ENCODE measurements at regions of chr4 and their contacts with region 1.

Region 1: GRCh38 chr4:119103263-119103662 is 32.4 kb upstream of the MYOZ2 start:
- DNase-seq: peak in 1 of 2 donors; percentile 87
- H3K4me3 ChIP-seq: no peak overlapping the region
- H3K27ac ChIP-seq: peak overlapping the region; percentile 81
- H3K4me1 ChIP-seq: peaks cover 0 to 47% of the 10 kb centered on the region in 2 donors
- H3K27me3 ChIP-seq: no peaks in the 10 kb centered on the region
- CTCF ChIP-seq: no peak

Region 2: GRCh38 chr4:118765399-118765798 is 337.9 kb before region 1 on chr4:
- intact Hi-C with region 1: loop called (anchors 10 kb)
- DNase-seq: no peak
- H3K4me3 ChIP-seq: no peak overlapping the region
- H3K27ac ChIP-seq: peak overlapping the region; percentile 76 to 87
- H3K4me1 ChIP-seq: peaks cover 17 to 62% of the 10 kb centered on the region in 2 donors
- H3K27me3 ChIP-seq: no peaks in the 10 kb centered on the region
- CTCF ChIP-seq: no peak

Region 3: DNA sequence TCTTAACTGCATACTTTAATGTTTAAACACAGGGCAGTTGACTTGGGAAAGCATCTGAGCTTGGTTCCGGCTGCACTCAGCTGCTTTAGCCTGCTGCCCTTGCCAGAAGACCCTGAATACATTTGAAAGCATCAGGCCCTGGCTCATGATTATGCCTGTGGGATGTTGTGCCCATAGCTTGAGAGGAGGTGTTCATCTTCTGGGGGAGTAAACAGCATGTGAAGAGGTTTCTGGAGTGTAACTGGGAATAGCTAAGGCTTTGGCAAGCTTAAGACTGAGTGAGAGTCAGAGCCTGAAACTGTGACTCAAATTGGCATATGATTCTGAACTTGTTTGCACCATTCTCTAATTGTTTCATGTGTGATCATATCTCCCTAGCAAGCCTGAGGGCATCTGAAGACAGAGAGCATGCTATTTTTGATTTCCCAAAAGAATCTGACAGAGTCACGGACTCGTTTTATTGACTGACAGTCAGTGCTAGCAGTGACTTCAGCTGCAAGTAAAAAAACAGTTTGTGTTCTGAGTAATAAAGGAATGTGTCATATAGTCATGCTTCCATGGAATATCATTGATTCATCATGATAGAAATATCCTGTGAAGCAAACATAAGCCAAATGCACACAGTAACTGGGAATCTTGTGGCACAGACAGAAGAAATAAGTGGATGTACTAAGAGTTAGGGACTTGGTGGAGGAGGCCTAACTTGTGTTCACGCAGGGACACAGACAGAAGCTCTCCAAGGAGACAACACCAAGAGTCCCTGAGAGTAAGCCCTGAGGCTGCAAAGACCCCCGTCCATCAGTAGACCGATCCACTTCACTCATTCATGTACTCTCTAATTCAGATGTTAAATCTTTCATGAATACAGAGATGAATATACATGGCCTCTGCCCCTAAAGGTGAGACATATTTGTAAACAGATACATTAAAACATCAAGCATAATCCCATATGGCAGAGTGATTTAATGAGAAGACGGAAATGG is 113.9 kb before region 1 on chr4:
- intact Hi-C with region 1: loop called (anchors 2 kb)
- DNase-seq: no peak
- H3K4me3 ChIP-seq: peak overlapping the region in 1 of 2 donors; percentile 3
- H3K27ac ChIP-seq: peak overlapping the region; percentile 95 to 96
- H3K4me1 ChIP-seq: peaks cover 16 to 57% of the 10 kb centered on the region in 2 donors
- H3K27me3 ChIP-seq: no peaks in the 10 kb centered on the region
- CTCF ChIP-seq: no peak

Region 4: GRCh38 chr4:119087121-119087520 is 16.1 kb before region 1 on chr4:
- intact Hi-C with region 1: no loop called
- DNase-seq: no peak
- H3K4me3 ChIP-seq: no peak overlapping the region
- H3K27ac ChIP-seq: peak overlapping the region in 1 of 2 donors; percentile 30
- H3K4me1 ChIP-seq: peaks cover 0 to 3% of the 10 kb centered on the region in 2 donors
- H3K27me3 ChIP-seq: no peaks in the 10 kb centered on the region
- CTCF ChIP-seq: peak in 1 of 3 experiments; percentile 30

Region 5: GRCh38 chr4:119138046-119138445 is 34.8 kb after region 1 on chr4:
- intact Hi-C with region 1: loop called (anchors 5 kb)
- DNase-seq: no peak
- H3K4me3 ChIP-seq: no peak overlapping the region
- H3K27ac ChIP-seq: no peak overlapping the region
- H3K4me1 ChIP-seq: peaks cover 0 to 31% of the 10 kb centered on the region in 2 donors
- H3K27me3 ChIP-seq: no peaks in the 10 kb centered on the region
- CTCF ChIP-seq: no peak